ENCODE measurements at regions of chr1 and their contacts with region 1.

Region 1: DNA sequence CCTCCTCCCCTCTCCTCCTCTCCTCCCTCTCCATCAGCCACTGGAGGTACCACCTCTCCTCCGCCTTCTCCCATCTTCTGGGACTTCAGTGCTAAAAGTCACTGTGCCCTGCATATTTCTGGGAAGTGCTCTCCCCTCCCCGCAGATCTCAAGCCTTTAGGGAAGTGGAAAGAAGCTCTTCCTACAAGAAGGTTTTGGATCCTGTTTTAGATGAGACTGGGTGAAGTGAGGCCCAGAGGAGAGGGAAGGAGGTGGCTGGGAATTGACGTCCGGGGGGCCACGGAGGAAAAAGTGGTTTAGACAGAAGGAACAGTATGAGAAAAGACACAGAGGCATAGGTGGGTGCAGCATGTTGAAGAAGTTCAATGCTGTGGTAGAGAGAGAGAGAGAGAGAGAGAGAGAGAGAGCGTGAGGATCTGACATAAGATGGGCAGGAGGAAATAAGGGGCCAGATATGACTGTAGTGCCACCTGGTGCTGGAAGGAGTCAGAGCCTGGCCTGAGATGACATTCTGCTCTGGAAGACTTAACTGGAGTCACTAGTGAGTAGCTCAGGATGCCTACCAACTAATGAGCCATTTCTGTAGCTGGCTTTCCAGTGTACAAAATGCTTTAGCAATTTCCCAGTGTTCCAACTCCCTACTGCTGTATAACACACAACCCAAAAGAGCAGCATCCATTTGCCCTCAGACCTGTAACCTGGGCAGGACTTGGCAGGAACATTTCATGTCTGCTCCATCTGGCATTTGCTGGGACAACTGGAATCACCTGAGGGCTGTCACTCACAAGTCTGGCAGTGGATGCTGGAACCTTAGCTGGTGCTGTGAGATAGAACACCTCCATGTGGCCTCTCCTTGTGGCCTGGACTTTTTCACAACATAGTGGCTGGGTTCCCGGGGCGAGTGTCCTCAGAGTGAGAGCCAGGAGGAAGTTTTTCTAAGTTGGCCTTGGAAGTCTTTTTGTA is 16.6 kb upstream of the ZSCAN20 start:
- DNase-seq: peak in 1 of 2 donors; percentile 60
- ATAC-seq: peak; percentile 75 to 90 (median 84)
- H3K4me3 ChIP-seq: no peak overlapping the region
- H3K27ac ChIP-seq: peak overlapping the region in 7 of 10 donors; percentile 24 to 72 (median 54)
- H3K4me1 ChIP-seq: peaks cover 0 to 57% (median 25%) of the 10 kb centered on the region in 9 donors
- H3K27me3 ChIP-seq: no peaks in the 10 kb centered on the region
- CTCF ChIP-seq: peak; percentile 21 to 74 (median 65)

Region 2: DNA sequence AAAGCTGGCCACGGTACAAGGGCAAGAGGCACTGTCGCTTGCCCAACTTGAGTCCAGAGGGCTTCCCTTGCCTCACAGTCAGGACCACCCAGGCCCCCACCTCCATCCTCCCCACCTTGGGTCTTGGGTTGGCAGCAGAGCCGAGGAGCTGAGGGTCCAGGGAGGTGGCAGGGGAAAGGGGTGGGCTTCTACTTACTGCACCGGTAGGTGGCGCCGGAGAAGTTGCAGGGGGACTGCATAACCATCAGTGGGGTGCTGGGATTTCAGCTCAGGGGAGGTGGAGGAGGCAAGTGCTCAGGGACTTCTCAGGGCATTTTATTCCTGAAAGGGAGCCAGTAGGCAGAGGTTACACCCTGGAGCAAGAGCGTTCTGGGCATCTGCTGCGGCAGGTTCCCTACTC is 318.0 kb before region 1 on chr1:
- intact Hi-C with region 1: loop called in 2 of 10 experiments (anchors 10 kb)
- DNase-seq: peak; percentile 30 to 58
- ATAC-seq: peak in 4 of 8 donors; percentile 36 to 61 (median 50)
- H3K4me3 ChIP-seq: no peak overlapping the region
- H3K27ac ChIP-seq: no peak overlapping the region
- H3K4me1 ChIP-seq: peaks cover 0 to 14% (median 2%) of the 10 kb centered on the region in 9 donors
- H3K27me3 ChIP-seq: no peaks in the 10 kb centered on the region
- CTCF ChIP-seq: peak in 8 of 9 donors; percentile 36 to 67 (median 58)

Region 3: GRCh38 chr1:33219881-33220661 is 235.7 kb before region 1 on chr1:
- intact Hi-C with region 1: loop called in 3 of 10 experiments (anchors 10 kb)
- DNase-seq: no peak
- ATAC-seq: peak in 4 of 8 donors; percentile 30 to 46 (median 44)
- H3K4me3 ChIP-seq: no peak overlapping the region
- H3K27ac ChIP-seq: peak overlapping the region in 2 of 10 donors; percentile 2 to 15
- H3K4me1 ChIP-seq: peaks cover 0 to 25% (median 6%) of the 10 kb centered on the region in 9 donors
- H3K27me3 ChIP-seq: no peaks in the 10 kb centered on the region
- CTCF ChIP-seq: no peak

Region 4: DNA sequence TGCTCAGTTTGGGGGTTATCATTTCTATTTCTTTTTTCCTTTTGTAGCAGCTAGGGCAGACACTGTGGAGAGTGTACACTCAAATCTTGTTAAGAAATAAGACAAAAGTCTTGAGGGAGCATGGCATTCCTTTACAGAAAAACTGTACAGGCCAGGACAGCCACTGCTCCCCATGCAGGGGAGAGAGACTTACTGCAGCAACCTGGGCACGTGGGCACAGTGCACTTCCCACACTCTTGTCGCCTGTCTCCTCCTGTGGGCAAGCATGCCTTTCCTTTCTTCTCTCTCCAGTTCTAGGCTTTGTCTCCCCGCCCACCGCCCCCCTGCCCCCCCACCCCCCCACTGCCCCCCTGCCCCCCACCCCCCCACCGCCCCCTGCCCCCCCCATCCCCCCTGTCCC is 76.8 kb before region 1 on chr1:
- intact Hi-C with region 1: loop called in 6 of 10 experiments (anchors 5 to 10 kb)
- DNase-seq: no peak
- ATAC-seq: peak in 4 of 8 donors; percentile 19 to 48 (median 44)
- H3K4me3 ChIP-seq: no peak overlapping the region
- H3K27ac ChIP-seq: peak overlapping the region in 6 of 10 donors; percentile 32 to 65 (median 46)
- H3K4me1 ChIP-seq: peaks cover 12 to 81% (median 48%) of the 10 kb centered on the region in 9 donors
- H3K27me3 ChIP-seq: no peaks in the 10 kb centered on the region
- CTCF ChIP-seq: peak in 3 of 9 donors; percentile 9 to 17 (median 16)

Region 5: GRCh38 chr1:33384040-33384812 is 71.6 kb before region 1 on chr1:
- intact Hi-C with region 1: loop called in 3 of 10 experiments (anchors 5 to 10 kb)
- DNase-seq: no peak
- ATAC-seq: peak in 5 of 8 donors; percentile 13 to 51 (median 38)
- H3K4me3 ChIP-seq: no peak overlapping the region
- H3K27ac ChIP-seq: peak overlapping the region in 8 of 10 donors; percentile 25 to 77 (median 73)
- H3K4me1 ChIP-seq: peaks cover 12 to 70% (median 49%) of the 10 kb centered on the region in 9 donors
- H3K27me3 ChIP-seq: no peaks in the 10 kb centered on the region
- CTCF ChIP-seq: no peak

Region 6: GRCh38 chr1:33400153-33400911 is 55.5 kb before region 1 on chr1:
- intact Hi-C with region 1: loop called in 1 of 10 experiments (anchors 5 kb)
- DNase-seq: no peak
- ATAC-seq: peak; percentile 72 to 95 (median 87)
- H3K4me3 ChIP-seq: no peak overlapping the region
- H3K27ac ChIP-seq: peak overlapping the region; percentile 33 to 81 (median 68)
- H3K4me1 ChIP-seq: peaks cover 3 to 54% (median 17%) of the 10 kb centered on the region in 9 donors
- H3K27me3 ChIP-seq: no peaks in the 10 kb centered on the region
- CTCF ChIP-seq: no peak

Region 7: DNA sequence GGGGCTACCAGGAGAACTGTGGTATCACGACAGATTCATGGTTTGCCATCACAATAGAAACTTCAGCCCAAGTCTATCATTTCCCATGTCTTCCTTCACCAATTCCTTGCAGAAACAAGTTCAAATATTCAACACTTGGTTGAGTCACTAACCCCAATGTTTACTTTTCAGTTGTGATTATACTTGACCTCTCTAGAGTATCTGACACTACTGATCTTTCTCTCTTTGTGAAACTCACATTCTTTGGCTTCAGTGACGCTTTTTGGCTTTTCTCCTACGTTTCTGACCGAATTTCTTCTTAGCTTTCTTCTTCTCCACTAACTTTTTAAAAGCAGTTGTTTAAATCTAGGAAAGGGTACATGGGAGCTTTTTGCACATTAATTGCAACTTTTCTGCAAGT is 359.2 kb after region 1 on chr1:
- intact Hi-C with region 1: no loop called
- DNase-seq: no peak
- ATAC-seq: no peak
- H3K4me3 ChIP-seq: no peak overlapping the region
- H3K27ac ChIP-seq: no peak overlapping the region
- H3K4me1 ChIP-seq: no peaks in the 10 kb centered on the region
- H3K27me3 ChIP-seq: peaks cover 0 to 8% (median 3%) of the 10 kb centered on the region in 7 donors
- CTCF ChIP-seq: no peak

Measured in heart right ventricle (tissue), 16 donors.